H1 (cell line): ENCODE measurements at regions of chr19 and their contacts with region 1.

Region 1: GRCh38 chr19:48842789-48843162 is 6.5 kb upstream of the HSD17B14 start:
- DNase-seq: peak in 1 of 2 experiments; percentile 75
- H3K4me3 ChIP-seq: no peak overlapping the region
- H3K27ac ChIP-seq: no peak overlapping the region
- H3K4me1 ChIP-seq: no peaks in the 10 kb centered on the region; a peak in 1 of 7 replicates
- H3K27me3 ChIP-seq: no peaks in the 10 kb centered on the region
- CTCF ChIP-seq: peak; percentile 27 to 80 (median 76)
- EP300 ChIP-seq: no peak
- POLR2A ChIP-seq: no peak
- RAD21 ChIP-seq: peak; percentile 71 to 81

Region 2: DNA sequence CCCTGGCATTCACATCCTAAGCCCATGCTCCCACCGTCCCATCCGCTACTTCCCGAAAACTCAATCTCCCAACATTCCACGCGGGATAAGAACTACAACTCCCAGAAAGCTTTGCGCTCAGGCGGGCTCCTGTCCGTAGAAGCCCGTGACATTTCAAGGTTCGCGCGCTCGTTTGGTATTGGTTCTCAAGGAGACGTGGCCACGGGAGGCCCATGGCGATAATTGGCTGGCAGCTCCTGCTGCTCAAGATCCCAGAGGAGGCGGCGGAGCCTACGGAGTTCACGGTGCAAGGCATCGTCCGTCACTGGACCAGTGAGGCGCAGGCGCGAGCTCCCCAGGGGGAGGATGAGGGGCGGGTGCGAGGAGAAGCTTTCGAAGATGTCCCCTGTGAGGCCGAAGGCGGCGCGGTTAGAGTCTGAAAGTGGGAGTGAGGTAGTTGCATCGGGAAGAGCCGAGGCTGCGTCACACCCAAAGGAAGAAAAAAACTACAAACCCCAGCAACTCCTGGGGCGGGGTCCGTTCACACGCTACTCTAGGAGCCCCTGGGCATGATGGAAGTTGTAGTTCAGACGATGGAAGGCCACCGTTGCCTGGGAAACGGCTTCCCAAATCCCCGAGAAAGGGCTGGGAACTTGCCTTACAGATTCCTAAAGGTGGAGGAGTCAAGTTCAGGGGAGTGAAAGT is 122.0 kb before region 1 on chr19:
- CTCF ChIA-PET with region 1: no interaction called
- POLR2A ChIA-PET with region 1: no interaction called
- DNase-seq: peak; percentile 93 to 97
- H3K4me3 ChIP-seq: peak overlapping the region; percentile 59 to 96 (median 84)
- H3K27ac ChIP-seq: peak overlapping the region; percentile 68; the same call in 1 of the 2 replicates
- H3K4me1 ChIP-seq: peaks cover 0 to 20% (median 12%) of the 10 kb centered on the region in 4 experiments; a peak in 6 of 7 replicates
- H3K27me3 ChIP-seq: no peaks in the 10 kb centered on the region
- CTCF ChIP-seq: no peak
- EP300 ChIP-seq: no peak
- POLR2A ChIP-seq: no peak
- RAD21 ChIP-seq: no peak

Region 3: DNA sequence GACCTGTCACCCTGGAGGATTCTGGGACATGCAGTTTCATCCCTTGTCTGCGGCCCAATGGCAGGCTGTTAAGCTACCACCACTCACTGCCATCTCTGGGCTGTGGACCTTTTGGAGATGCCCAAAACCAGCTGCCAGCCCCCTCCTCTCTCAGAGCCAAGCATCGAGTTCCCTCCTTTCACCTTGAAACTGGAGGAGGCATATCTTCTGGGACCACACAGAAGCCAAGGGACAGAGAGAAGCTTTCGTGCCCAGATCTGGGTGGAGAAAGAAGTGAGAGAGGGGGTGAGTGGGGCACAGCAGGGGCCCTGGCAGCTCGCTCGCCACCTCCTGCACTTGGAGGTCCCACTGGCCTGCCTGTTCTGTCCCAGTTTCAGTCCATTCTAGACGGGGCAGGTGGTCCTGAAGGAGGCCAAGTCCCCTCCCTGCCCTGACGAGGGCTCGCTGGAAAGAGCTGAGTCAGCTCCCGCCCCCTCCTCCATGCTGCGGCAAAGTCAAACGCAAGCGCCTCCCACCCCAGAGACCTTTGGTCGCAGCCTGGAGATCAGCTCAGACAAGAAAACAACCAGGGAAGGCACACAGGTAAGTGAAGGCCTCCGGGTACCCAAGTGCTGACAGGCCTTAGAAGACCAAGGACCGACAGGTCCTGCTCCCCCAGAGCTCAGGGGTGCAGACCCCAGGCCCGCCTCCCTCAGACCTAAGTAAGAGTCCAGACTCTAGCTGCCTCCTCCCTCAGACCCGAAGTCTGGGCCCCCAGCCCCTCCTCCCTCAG is 35.8 kb before region 1 on chr19:
- CTCF ChIA-PET with region 1: interaction called, 16 read pairs
- POLR2A ChIA-PET with region 1: interaction called, 4 read pairs
- DNase-seq: peak in 1 of 2 experiments; percentile 55
- H3K4me3 ChIP-seq: peak overlapping the region in 1 of 4 experiments; percentile 3; a peak in 1 of 8 replicates
- H3K27ac ChIP-seq: peak overlapping the region; percentile 36; the same call in 1 of the 2 replicates
- H3K4me1 ChIP-seq: peaks cover 0 to 19% (median 13%) of the 10 kb centered on the region in 4 experiments; a peak in 6 of 7 replicates
- H3K27me3 ChIP-seq: peaks cover 0 to 11% (median 0%) of the 10 kb centered on the region in 4 experiments; a peak in 3 of 7 replicates
- CTCF ChIP-seq: no peak
- EP300 ChIP-seq: no peak
- POLR2A ChIP-seq: no peak
- RAD21 ChIP-seq: no peak

Region 4: DNA sequence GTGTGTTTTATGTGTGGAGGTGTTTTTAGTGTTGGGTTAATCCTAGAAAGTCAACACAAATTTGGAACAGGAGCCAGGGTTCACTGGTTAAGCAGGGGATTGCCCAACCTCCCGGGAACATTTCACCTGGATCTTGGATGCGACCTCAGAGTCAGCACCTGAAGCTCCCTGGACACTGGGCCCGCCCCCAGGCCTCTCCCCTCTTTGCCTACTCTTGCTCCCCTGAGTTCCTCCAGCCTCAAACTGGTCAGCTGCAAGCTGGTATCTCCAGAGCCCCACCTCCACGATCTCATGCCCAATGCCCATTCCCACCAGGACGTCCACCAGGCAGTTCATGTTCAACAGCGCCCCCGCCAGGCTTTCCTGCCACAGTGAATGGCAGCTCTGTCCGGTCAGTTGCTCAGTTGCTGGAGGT is 16.2 kb before region 1 on chr19:
- CTCF ChIA-PET with region 1: interaction called, 24 read pairs
- POLR2A ChIA-PET with region 1: interaction called, 3 read pairs
- DNase-seq: peak in 1 of 2 experiments; percentile 85
- H3K4me3 ChIP-seq: no peak overlapping the region
- H3K27ac ChIP-seq: no peak overlapping the region
- H3K4me1 ChIP-seq: no peaks in the 10 kb centered on the region
- H3K27me3 ChIP-seq: no peaks in the 10 kb centered on the region
- CTCF ChIP-seq: peak; percentile 74 to 83 (median 83)
- EP300 ChIP-seq: no peak
- POLR2A ChIP-seq: no peak
- RAD21 ChIP-seq: peak; percentile 63 to 68

Region 5: GRCh38 chr19:48853483-48853882 is 10.7 kb after region 1 on chr19:
- CTCF ChIA-PET with region 1: interaction called, 15 read pairs
- POLR2A ChIA-PET with region 1: interaction called, 8 read pairs
- DNase-seq: no peak
- H3K4me3 ChIP-seq: no peak overlapping the region
- H3K27ac ChIP-seq: no peak overlapping the region
- H3K4me1 ChIP-seq: no peaks in the 10 kb centered on the region
- H3K27me3 ChIP-seq: no peaks in the 10 kb centered on the region
- CTCF ChIP-seq: no peak
- EP300 ChIP-seq: no peak
- POLR2A ChIP-seq: no peak
- RAD21 ChIP-seq: no peak

Region 6: GRCh38 chr19:48887861-48888612 is 45.3 kb after region 1 on chr19:
- CTCF ChIA-PET with region 1: interaction called, 12 read pairs
- POLR2A ChIA-PET with region 1: interaction called, 4 read pairs
- DNase-seq: no peak
- H3K4me3 ChIP-seq: no peak overlapping the region
- H3K27ac ChIP-seq: no peak overlapping the region
- H3K4me1 ChIP-seq: peaks cover 0 to 3% (median 0%) of the 10 kb centered on the region in 4 experiments; a peak in 1 of 7 replicates
- H3K27me3 ChIP-seq: no peaks in the 10 kb centered on the region
- CTCF ChIP-seq: no peak
- EP300 ChIP-seq: no peak
- POLR2A ChIP-seq: no peak
- RAD21 ChIP-seq: no peak

Region 7: DNA sequence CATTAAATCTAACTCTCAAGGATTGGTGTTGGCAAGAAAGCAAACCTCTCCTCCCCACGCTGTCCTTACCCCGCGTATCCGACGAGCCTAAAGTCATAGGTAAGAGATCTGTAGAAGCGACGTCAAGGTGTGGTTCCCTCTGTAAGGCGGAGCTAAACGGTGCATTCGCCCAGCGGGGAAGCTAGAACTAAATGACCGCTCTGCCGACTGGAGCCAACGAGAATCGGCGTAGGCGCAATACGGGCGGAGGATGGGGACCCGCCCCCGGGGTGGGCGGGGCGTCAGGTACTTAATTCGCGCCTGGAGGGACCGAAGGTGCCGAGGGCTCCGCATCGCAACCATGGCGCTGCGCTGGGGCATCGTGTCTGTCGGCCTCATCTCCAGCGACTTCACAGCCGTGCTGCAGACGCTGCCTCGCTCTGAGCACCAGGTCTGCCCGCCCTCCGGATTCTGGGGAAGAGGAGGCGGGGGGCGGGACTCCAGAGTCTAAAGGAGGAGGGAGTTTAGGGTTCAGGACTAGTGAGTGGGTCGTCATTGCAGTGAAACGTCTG is 90.7 kb after region 1 on chr19 and contains the start of gene DHDH:
- CTCF ChIA-PET with region 1: interaction called, 11 read pairs
- POLR2A ChIA-PET with region 1: no interaction called
- DNase-seq: peak; percentile 92 to 97
- H3K4me3 ChIP-seq: peak within 1 kb of the TSS; percentile 2 to 58 (median 36); a peak in 7 of 8 replicates
- H3K27ac ChIP-seq: no peak within 1 kb of the TSS
- H3K4me1 ChIP-seq: peaks cover 3 to 8% (median 6%) of the 10 kb centered on the region in 4 experiments; a peak in 6 of 7 replicates
- H3K27me3 ChIP-seq: peaks cover 0 to 14% (median 10%) of the 10 kb centered on the region in 4 experiments; a peak in 5 of 7 replicates
- CTCF ChIP-seq: no peak
- EP300 ChIP-seq: no peak
- POLR2A ChIP-seq: peak in 1 of 2 experiments; percentile 73; a peak in 2 of 3 replicates
- RAD21 ChIP-seq: no peak
- total RNA-seq, gene DHDH: 2.2 and 2.7 TPM in 2 replicates